ENCODE measurements at regions of chr20 and their contacts with region 1.

Region 1: DNA sequence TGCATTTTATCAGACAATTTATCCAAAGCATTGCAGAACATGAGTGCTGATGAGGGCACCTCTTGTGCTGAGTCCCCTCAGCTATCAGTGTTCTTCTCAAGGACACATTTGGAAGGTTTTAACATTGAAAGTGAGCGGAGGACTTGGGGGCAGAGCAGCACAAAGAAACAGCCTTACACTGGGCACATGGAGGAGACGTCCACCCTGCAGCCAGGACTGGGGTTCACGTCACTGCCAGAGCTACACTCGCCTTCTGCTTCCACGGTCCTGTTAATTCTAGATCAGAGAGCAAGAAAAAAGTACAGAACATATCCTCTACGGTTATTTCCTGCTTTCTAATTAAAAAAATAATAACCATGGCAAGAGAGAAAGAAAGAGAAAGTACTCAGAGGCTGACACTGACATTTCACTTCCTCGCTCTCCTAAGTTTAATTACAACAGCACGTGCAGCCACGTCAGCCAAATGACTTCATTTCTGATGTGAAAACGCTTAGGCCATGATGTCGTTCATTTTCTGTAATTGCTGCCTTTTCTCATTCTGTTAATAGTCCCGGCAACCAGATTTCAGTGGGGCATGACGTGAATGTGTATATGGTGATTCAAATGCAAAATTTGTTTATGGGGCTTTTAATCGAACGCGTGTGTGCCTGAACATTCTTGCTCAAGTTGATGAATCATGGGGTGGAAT is 5.1 kb downstream of the PRND start:
- DNase-seq: peak; percentile 77
- ATAC-seq: peak; percentile 80
- H3K4me3 Mint-ChIP-seq: peak overlapping the region; percentile 39
- H3K27ac Mint-ChIP-seq: peak overlapping the region; percentile 73
- H3K4me1 Mint-ChIP-seq: peaks cover 13% of the 10 kb centered on the region
- H3K27me3 Mint-ChIP-seq: no peaks in the 10 kb centered on the region

Region 2: GRCh38 chr20:4740774-4741431 is 14.0 kb after region 1 on chr20:
- CTCF ChIA-PET with region 1: interaction called, 11 read pairs
- POLR2A ChIA-PET with region 1: no interaction called
- intact Hi-C with region 1: no loop called
- DNase-seq: peak; percentile 82
- ATAC-seq: peak; percentile 61
- H3K4me3 Mint-ChIP-seq: no peak overlapping the region
- H3K27ac Mint-ChIP-seq: no peak overlapping the region
- H3K4me1 Mint-ChIP-seq: peaks cover 3% of the 10 kb centered on the region
- H3K27me3 Mint-ChIP-seq: peaks cover 5% of the 10 kb centered on the region

Region 3: DNA sequence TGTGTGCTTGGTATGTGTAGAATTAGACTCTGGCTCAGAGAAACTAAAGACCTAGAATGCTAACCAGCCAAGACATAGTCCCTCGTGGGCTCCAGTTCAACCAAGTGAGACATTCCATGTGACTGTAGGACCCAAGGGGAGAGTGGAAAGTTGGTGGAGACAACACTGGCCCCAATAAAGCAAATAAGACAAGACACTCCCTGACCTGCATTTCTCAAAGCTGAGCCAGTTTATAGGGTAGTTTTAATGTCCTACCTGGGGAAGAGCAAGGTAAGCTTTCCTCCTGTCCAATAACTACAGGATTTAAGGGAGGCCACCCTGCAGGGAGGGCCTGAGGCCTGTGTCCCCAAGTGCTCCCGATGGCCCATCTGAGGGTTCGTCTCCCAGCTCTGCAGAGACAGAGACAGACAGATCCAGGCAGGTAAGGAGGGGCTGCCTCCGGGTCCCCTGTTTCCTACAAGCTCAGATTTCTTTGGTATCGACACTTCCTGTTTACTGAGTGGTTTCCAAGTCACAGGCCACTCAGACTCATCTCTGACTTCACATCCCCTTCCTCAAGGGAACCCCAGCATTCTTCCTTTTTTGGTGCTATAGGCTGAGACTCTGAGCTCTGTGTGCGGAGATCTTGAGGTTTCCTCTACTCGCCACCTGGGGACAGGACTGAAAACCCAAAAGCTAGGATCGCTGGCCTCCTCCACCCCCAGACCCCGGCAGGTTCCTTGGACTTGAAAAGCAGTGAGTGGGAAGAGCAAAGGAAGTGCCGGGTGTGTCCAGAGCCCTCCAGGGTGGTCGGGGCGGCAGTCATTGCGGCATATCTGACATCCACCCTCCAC is 87.2 kb after region 1 on chr20:
- CTCF ChIA-PET with region 1: no interaction called
- POLR2A ChIA-PET with region 1: no interaction called
- intact Hi-C with region 1: no loop called
- DNase-seq: peak; percentile 69
- ATAC-seq: peak; percentile 73
- H3K4me3 Mint-ChIP-seq: peak overlapping the region; percentile 96
- H3K27ac Mint-ChIP-seq: peak overlapping the region; percentile 100
- H3K4me1 Mint-ChIP-seq: peaks cover 73% of the 10 kb centered on the region
- H3K27me3 Mint-ChIP-seq: no peaks in the 10 kb centered on the region